ENCODE measurements at regions of chr7 and their contacts with region 1.

Region 1: DNA sequence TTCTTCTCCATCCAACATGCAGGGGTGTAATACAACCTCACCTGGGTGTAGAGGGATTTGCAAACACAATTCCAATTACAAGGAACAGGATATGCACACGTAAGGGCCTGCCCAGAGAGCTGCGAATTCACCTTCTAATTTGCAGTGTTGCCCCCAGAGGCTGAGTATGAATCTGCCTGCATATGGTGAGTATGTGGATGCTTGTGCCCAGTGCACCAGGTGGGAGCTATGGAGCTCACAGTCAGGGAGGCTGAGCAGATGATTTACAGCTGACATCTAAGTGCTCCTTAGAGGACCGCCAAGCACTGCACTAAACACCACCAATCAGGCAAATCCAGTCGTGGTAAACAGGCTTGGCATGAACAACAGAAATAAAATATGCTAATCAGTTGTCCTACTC is 132.0 kb downstream of the RELN start:
- DNase-seq: no peak
- H3K4me3 ChIP-seq: no peak overlapping the region
- H3K4me3 Mint-ChIP-seq: no peak overlapping the region
- H3K27ac Mint-ChIP-seq: no peak overlapping the region
- H3K4me1 ChIP-seq: peaks cover 7% of the 10 kb centered on the region; the same call in 1 of the 2 replicates
- H3K4me1 Mint-ChIP-seq: no peaks in the 10 kb centered on the region
- H3K27me3 ChIP-seq: no peaks in the 10 kb centered on the region
- H3K27me3 Mint-ChIP-seq: peaks cover 4% of the 10 kb centered on the region
- CTCF ChIP-seq: no peak

Region 2: DNA sequence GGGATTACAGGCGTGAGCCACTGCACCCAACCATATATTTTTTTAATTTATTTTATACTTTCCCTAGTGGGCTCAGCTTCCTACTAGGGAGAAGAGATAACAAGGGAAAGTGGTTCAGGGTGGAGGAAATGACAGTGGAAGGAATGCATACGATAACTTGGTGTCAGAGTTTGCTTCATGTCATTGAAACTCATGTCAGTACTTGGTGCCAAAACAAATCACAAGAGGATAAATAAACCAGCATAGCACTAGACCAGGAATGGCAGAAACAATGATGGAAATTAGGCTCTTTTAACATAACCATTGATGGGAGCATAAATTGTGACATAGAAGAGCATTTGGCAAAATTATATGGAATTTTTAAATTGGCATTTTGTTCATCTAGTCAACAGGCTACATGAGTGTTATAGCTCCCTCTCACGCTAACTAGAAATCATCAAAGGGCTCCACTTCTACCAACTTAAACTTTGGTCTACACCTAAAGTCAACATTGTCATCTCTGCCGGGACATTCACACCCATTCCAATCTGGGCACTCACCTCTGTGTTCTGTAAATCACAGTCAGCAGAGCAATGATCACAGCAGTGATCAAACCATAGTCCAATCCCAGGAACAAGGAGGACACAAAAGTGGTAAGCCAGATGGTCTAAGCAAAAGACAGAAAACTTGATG is 468.8 kb before region 1 on chr7:
- CTCF ChIA-PET with region 1: no interaction called
- POLR2A ChIA-PET with region 1: interaction called, 10 read pairs
- intact Hi-C with region 1: no loop called
- DNase-seq: no peak
- H3K4me3 ChIP-seq: no peak overlapping the region
- H3K4me3 Mint-ChIP-seq: no peak overlapping the region
- H3K27ac Mint-ChIP-seq: no peak overlapping the region
- H3K4me1 ChIP-seq: no peaks in the 10 kb centered on the region
- H3K4me1 Mint-ChIP-seq: no peaks in the 10 kb centered on the region
- H3K27me3 ChIP-seq: no peaks in the 10 kb centered on the region
- H3K27me3 Mint-ChIP-seq: no peaks in the 10 kb centered on the region
- CTCF ChIP-seq: no peak

Region 3: GRCh38 chr7:103766660-103767059 is 90.8 kb before region 1 on chr7:
- CTCF ChIA-PET with region 1: no interaction called
- POLR2A ChIA-PET with region 1: no interaction called
- intact Hi-C with region 1: no loop called
- DNase-seq: no peak
- H3K4me3 ChIP-seq: no peak overlapping the region
- H3K4me3 Mint-ChIP-seq: no peak overlapping the region
- H3K27ac Mint-ChIP-seq: no peak overlapping the region
- H3K4me1 ChIP-seq: no peaks in the 10 kb centered on the region
- H3K4me1 Mint-ChIP-seq: no peaks in the 10 kb centered on the region
- H3K27me3 ChIP-seq: no peaks in the 10 kb centered on the region
- H3K27me3 Mint-ChIP-seq: no peaks in the 10 kb centered on the region
- CTCF ChIP-seq: no peak

Region 4: DNA sequence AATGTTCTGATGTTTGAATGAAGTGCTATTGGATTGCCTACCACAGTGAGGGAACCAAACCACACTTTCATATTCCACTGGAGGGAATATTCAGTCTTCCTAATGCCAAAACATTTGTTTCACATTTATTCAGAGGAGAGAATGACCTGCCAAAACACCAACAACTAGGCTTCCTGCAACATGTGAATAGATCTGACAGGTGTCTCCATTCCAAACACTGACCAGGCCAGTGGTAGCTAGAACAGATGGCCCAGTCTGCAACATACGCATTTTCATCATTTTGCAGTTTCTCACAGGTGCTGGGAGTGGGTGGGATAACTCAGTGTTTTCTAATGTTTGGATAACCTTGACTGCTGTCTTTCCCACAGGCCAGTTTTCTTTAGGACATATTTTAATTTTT is 22.0 kb after region 1 on chr7:
- CTCF ChIA-PET with region 1: no interaction called
- POLR2A ChIA-PET with region 1: no interaction called
- intact Hi-C with region 1: no loop called
- DNase-seq: no peak
- H3K4me3 ChIP-seq: no peak overlapping the region
- H3K4me3 Mint-ChIP-seq: no peak overlapping the region
- H3K27ac Mint-ChIP-seq: no peak overlapping the region
- H3K4me1 ChIP-seq: no peaks in the 10 kb centered on the region
- H3K4me1 Mint-ChIP-seq: peaks cover 5% of the 10 kb centered on the region
- H3K27me3 ChIP-seq: no peaks in the 10 kb centered on the region
- H3K27me3 Mint-ChIP-seq: no peaks in the 10 kb centered on the region
- CTCF ChIP-seq: no peak